A549 (cell line): ENCODE measurements at regions of chr5 and their contacts with region 1.

Region 1: GRCh38 chr5:146541958-146542849 is 26.2 kb upstream of the GPR151 start:
- DNase-seq: peak; percentile 69 to 70
- ATAC-seq: peak; percentile 97 to 99
- H3K4me3 ChIP-seq: no peak overlapping the region
- H3K27ac ChIP-seq: no peak overlapping the region
- H3K4me1 ChIP-seq: no peaks in the 10 kb centered on the region
- CTCF ChIP-seq: peak; percentile 80
- EP300 ChIP-seq: no peak
- POLR2A ChIP-seq: no peak
- RAD21 ChIP-seq: peak; percentile 89 to 94

Region 2: DNA sequence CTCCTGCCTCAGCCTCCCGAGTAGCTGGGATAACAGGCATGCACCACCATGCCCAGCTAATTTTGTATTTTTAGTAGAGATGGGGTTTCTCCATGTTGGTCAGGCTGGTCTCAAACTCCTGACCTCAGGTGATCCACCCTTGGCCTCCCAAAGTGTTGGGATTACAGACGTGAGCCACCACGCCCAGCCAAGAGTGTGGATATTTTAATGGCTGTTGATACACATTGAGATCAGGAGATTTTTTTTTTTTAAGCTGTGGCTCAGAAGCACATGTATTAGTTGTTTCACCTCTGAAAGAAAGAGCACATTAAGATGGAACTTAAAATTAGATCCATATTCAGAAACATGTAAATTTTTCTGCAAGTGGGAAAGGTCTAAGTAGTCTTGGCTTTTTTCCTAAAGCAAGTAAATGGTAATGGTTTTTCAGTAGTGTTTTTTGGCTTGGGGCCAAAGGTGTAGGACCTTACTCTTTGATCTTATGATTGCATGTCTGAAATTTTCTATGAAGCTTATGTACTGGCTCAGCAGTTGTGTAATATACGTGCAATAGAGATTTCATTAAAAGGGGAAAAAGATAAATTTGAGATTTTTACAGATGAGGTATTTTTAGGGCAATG is 328.9 kb before region 1 on chr5:
- CTCF ChIA-PET with region 1: no interaction called
- POLR2A ChIA-PET with region 1: no interaction called
- DNase-seq: peak in 1 of 2 experiments; percentile 41
- ATAC-seq: no peak
- H3K4me3 ChIP-seq: no peak overlapping the region
- H3K27ac ChIP-seq: no peak overlapping the region
- H3K4me1 ChIP-seq: peaks cover 38% of the 10 kb centered on the region
- CTCF ChIP-seq: no peak
- EP300 ChIP-seq: no peak
- POLR2A ChIP-seq: no peak
- RAD21 ChIP-seq: no peak

Region 3: GRCh38 chr5:146520731-146521130 is 21.5 kb before region 1 on chr5:
- CTCF ChIA-PET with region 1: interaction called, 11 read pairs
- POLR2A ChIA-PET with region 1: no interaction called
- DNase-seq: peak in 1 of 2 experiments; percentile 9
- ATAC-seq: no peak; a peak in 1 of 6 replicates
- H3K4me3 ChIP-seq: no peak overlapping the region
- H3K27ac ChIP-seq: no peak overlapping the region
- H3K4me1 ChIP-seq: no peaks in the 10 kb centered on the region
- CTCF ChIP-seq: no peak
- EP300 ChIP-seq: no peak
- POLR2A ChIP-seq: no peak
- RAD21 ChIP-seq: no peak

Region 4: GRCh38 chr5:146528236-146528635 is 14.0 kb before region 1 on chr5:
- CTCF ChIA-PET with region 1: interaction called, 50 read pairs
- POLR2A ChIA-PET with region 1: no interaction called
- DNase-seq: peak in 1 of 2 experiments; percentile 9
- ATAC-seq: peak in 1 of 2 experiments; percentile 43; a peak in 2 of 6 replicates
- H3K4me3 ChIP-seq: no peak overlapping the region
- H3K27ac ChIP-seq: no peak overlapping the region
- H3K4me1 ChIP-seq: no peaks in the 10 kb centered on the region
- CTCF ChIP-seq: no peak
- EP300 ChIP-seq: no peak
- POLR2A ChIP-seq: no peak
- RAD21 ChIP-seq: peak in 1 of 2 experiments; percentile 32; a peak in 2 of 5 replicates

Region 5: DNA sequence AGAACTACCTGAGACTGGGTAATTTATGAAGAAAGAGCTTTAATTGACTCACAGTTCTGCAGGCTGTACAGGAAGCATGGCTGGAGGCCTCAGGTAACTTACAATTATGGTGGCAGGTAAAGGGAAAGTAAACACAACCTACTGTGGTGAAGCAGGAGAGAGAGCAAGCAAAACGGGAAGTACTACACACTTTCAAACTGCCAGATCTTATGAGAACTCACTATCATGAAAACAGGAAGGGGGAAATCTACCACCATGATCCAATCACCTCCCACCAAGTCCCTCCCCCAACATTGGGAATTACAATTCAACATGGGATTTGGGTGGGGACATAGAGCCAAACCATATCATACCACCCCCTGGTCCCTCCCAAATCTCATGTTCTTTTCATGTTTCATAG is 32.5 kb after region 1 on chr5:
- CTCF ChIA-PET with region 1: no interaction called
- POLR2A ChIA-PET with region 1: no interaction called
- DNase-seq: no peak
- ATAC-seq: no peak
- H3K4me3 ChIP-seq: no peak overlapping the region
- H3K27ac ChIP-seq: no peak overlapping the region
- H3K4me1 ChIP-seq: no peaks in the 10 kb centered on the region
- CTCF ChIP-seq: no peak
- EP300 ChIP-seq: no peak
- POLR2A ChIP-seq: no peak
- RAD21 ChIP-seq: no peak

Region 6: GRCh38 chr5:146959360-146959759 is 417.2 kb after region 1 on chr5:
- CTCF ChIA-PET with region 1: interaction called, 121 read pairs
- POLR2A ChIA-PET with region 1: no interaction called
- DNase-seq: no peak
- ATAC-seq: peak in 1 of 2 experiments; percentile 50; a peak in 2 of 6 replicates
- H3K4me3 ChIP-seq: no peak overlapping the region
- H3K27ac ChIP-seq: no peak overlapping the region
- H3K4me1 ChIP-seq: no peaks in the 10 kb centered on the region
- CTCF ChIP-seq: no peak
- EP300 ChIP-seq: no peak
- POLR2A ChIP-seq: no peak
- RAD21 ChIP-seq: no peak

Region 7: DNA sequence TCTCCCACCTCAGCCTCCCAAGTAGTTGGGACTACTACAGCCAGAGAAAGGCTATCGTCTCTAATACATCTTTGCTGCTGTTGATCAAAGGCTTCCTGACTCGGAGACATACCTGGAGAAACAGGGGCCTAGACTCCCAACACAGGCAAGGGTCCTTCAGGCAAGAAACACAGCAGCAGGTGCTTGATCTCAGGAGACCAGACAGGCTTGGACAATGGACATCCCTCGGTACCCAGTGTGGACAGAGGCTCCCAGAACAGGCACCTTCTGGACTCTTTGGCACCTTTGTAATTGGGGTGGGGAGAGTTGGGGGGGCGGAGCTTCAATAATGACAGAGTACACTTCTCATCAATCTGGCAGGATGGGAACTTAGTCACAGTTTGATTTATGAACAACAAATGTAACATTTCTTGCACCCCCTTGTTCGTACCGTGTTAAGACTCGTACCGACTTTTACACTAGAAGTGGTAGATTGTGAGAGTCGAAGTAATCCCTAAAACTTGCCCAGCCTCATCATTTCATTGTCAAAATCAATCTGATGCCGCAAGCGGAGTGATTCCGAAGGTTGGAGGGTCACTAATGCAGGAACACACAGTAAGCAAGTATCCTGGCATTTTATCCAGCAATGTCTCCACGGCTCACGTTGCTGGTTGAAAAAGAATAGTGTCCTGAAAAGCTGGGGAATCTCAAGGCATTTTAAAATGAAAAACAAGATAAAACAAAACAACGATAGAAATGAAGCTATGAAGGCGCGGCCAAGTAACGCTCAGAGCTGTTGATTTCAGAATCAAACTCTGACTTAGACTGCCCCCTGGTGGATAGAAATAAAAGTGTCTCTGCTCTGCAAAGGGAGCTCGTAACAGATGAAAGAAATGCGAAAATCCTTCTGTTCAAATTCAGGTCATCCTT is 646.2 kb after region 1 on chr5:
- CTCF ChIA-PET with region 1: interaction called, 53 read pairs
- POLR2A ChIA-PET with region 1: no interaction called
- DNase-seq: peak; percentile 52 to 59
- ATAC-seq: peak; percentile 87 to 95
- H3K4me3 ChIP-seq: no peak overlapping the region
- H3K27ac ChIP-seq: no peak overlapping the region
- H3K4me1 ChIP-seq: no peaks in the 10 kb centered on the region
- CTCF ChIP-seq: peak; percentile 83
- EP300 ChIP-seq: no peak
- POLR2A ChIP-seq: no peak
- RAD21 ChIP-seq: peak; percentile 75 to 78